Gastrocnemius medialis (tissue), 4 donors: ENCODE measurements at regions of chr15 and their contacts with region 1.

Region 1: GRCh38 chr15:48358229-48358641 is 27.0 kb downstream of the DUT start:
- DNase-seq: no peak
- ATAC-seq: peak in 1 of 2 donors; percentile 40
- H3K4me3 ChIP-seq: no peak overlapping the region
- H3K27ac ChIP-seq: peak overlapping the region in 2 of 4 donors; percentile 14 to 51
- H3K4me1 ChIP-seq: no peaks in the 10 kb centered on the region
- H3K27me3 ChIP-seq: no peaks in the 10 kb centered on the region
- CTCF ChIP-seq: peak; percentile 31 to 49 (median 41)
- POLR2A ChIP-seq: no peak

Region 2: DNA sequence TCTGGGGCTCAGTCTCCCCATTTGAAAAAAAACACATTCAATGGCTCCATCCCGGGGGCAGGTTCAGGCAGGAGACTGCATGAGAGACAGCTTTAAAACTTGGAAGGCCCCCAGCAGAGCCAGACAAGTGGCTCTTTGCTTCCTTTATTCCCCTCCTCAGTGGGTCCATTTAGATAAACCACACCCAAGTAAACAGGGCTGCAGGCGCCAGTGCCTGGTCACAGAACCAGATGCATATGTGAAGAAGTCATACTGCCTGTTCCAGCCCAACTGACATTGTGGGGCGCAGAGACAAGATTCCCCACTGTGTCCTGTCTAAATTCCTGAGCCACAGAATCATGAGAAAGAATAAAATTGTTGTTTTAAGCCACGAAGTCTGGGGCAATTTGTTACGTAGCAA is 278.3 kb after region 1 on chr15:
- in situ Hi-C with region 1: loop called in 2 of 4 experiments (anchors 25 kb)
- intact Hi-C with region 1: loop called (anchors 5 kb)
- DNase-seq: no peak
- ATAC-seq: no peak
- H3K4me3 ChIP-seq: no peak overlapping the region
- H3K27ac ChIP-seq: no peak overlapping the region
- H3K4me1 ChIP-seq: no peaks in the 10 kb centered on the region
- H3K27me3 ChIP-seq: no peaks in the 10 kb centered on the region
- CTCF ChIP-seq: no peak
- POLR2A ChIP-seq: no peak

Region 3: GRCh38 chr15:48800811-48801455 is 442.7 kb after region 1 on chr15:
- in situ Hi-C with region 1: loop called (anchors 10 to 25 kb)
- intact Hi-C with region 1: loop called (anchors 5 kb)
- DNase-seq: no peak
- ATAC-seq: peak in 1 of 2 donors; percentile 33
- H3K4me3 ChIP-seq: no peak overlapping the region
- H3K27ac ChIP-seq: no peak overlapping the region
- H3K4me1 ChIP-seq: no peaks in the 10 kb centered on the region
- H3K27me3 ChIP-seq: no peaks in the 10 kb centered on the region
- CTCF ChIP-seq: peak in 2 of 5 experiments; percentile 23 to 36
- POLR2A ChIP-seq: no peak